ENCODE measurements at regions of chr2 and their contacts with region 1.

Region 1: GRCh38 chr2:30165050-30165520 is 18.3 kb downstream of the YPEL5 start:
- DNase-seq: peak in 8 of 9 experiments; percentile 28 to 90 (median 60)
- ATAC-seq: peak; percentile 83
- H3K4me3 ChIP-seq: no peak overlapping the region
- H3K4me3 Mint-ChIP-seq: no peak overlapping the region
- H3K27ac ChIP-seq: no peak overlapping the region
- H3K27ac Mint-ChIP-seq: no peak overlapping the region
- H3K4me1 ChIP-seq: no peaks in the 10 kb centered on the region
- H3K4me1 Mint-ChIP-seq: peaks cover 5% of the 10 kb centered on the region
- H3K27me3 ChIP-seq: no peaks in the 10 kb centered on the region
- H3K27me3 Mint-ChIP-seq: no peaks in the 10 kb centered on the region
- CTCF ChIP-seq: peak; percentile 93

Region 2: GRCh38 chr2:28855193-28855592 is 1309.9 kb before region 1 on chr2:
- CTCF ChIA-PET with region 1: no interaction called
- POLR2A ChIA-PET with region 1: no interaction called
- intact Hi-C with region 1: no loop called
- DNase-seq: no peak
- ATAC-seq: no peak
- H3K4me3 ChIP-seq: no peak overlapping the region
- H3K4me3 Mint-ChIP-seq: no peak overlapping the region
- H3K27ac ChIP-seq: no peak overlapping the region
- H3K27ac Mint-ChIP-seq: no peak overlapping the region
- H3K4me1 ChIP-seq: no peaks in the 10 kb centered on the region
- H3K4me1 Mint-ChIP-seq: no peaks in the 10 kb centered on the region
- H3K27me3 ChIP-seq: no peaks in the 10 kb centered on the region
- H3K27me3 Mint-ChIP-seq: no peaks in the 10 kb centered on the region
- CTCF ChIP-seq: no peak

Region 3: GRCh38 chr2:29000956-29001355 is 1164.1 kb before region 1 on chr2:
- CTCF ChIA-PET with region 1: no interaction called
- POLR2A ChIA-PET with region 1: no interaction called
- intact Hi-C with region 1: no loop called
- DNase-seq: peak in 2 of 9 experiments; percentile 34 to 38
- ATAC-seq: peak; percentile 13
- H3K4me3 ChIP-seq: no peak overlapping the region
- H3K4me3 Mint-ChIP-seq: no peak overlapping the region
- H3K27ac ChIP-seq: peak overlapping the region; percentile 19 to 79
- H3K27ac Mint-ChIP-seq: peak overlapping the region; percentile 92
- H3K4me1 ChIP-seq: peaks cover 28% of the 10 kb centered on the region
- H3K4me1 Mint-ChIP-seq: peaks cover 31% of the 10 kb centered on the region
- H3K27me3 ChIP-seq: no peaks in the 10 kb centered on the region
- H3K27me3 Mint-ChIP-seq: no peaks in the 10 kb centered on the region
- CTCF ChIP-seq: no peak

Region 4: DNA sequence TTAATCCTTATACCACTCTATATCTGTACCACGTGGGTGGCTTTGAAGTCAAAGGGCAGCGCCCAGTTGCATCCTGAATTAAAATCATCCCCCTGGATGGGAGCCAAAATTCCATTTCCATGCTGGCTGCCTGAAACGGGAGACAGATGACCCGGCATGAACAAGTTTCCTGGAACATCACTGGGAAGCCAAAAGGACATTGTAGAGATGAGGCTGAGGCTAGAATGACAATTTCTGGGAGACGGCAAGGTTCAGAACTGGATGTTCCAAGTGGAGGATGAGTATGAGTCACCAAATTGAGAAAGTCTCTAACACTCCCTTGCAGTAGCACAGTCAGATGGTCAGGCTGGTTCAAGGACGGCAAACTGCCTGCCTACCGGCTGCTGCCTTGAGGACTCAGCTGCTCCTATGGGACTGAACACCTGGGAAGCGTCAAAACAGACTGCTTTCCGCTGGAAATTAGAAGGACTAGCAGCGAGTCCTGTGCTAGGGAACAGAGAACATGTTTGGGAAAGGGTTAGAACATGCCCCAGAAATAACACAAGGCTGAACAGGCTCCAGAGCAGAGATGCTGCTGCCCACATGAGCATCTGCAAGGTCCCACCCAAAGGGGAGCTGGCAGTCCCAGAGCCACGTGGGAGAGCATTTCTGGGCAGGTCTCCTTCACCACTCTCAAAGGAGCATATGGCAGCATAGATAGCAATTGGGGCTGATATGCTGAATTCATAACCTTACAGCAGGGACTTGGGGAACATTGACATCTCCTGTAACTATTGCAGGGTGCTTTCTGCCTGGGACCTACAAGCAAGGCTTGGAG is 13.7 kb after region 1 on chr2:
- CTCF ChIA-PET with region 1: interaction called, 25 read pairs
- POLR2A ChIA-PET with region 1: no interaction called
- intact Hi-C with region 1: no loop called
- DNase-seq: no peak
- ATAC-seq: peak; percentile 27
- H3K4me3 ChIP-seq: no peak overlapping the region
- H3K4me3 Mint-ChIP-seq: no peak overlapping the region
- H3K27ac ChIP-seq: no peak overlapping the region
- H3K27ac Mint-ChIP-seq: no peak overlapping the region
- H3K4me1 ChIP-seq: no peaks in the 10 kb centered on the region
- H3K4me1 Mint-ChIP-seq: no peaks in the 10 kb centered on the region
- H3K27me3 ChIP-seq: no peaks in the 10 kb centered on the region
- H3K27me3 Mint-ChIP-seq: no peaks in the 10 kb centered on the region
- CTCF ChIP-seq: no peak

Region 5: GRCh38 chr2:30231212-30231995 is 66.3 kb after region 1 on chr2 and contains the start of gene LBH:
- CTCF ChIA-PET with region 1: interaction called, 26 read pairs
- POLR2A ChIA-PET with region 1: interaction called, 17 read pairs
- intact Hi-C with region 1: loop called (anchors 5 kb)
- DNase-seq: peak; percentile 82 to 97 (median 89)
- ATAC-seq: peak; percentile 48
- H3K4me3 ChIP-seq: peak within 1 kb of the TSS; percentile 89 to 96
- H3K4me3 Mint-ChIP-seq: peak within 1 kb of the TSS; percentile 94
- H3K27ac ChIP-seq: peak within 1 kb of the TSS; percentile 92 to 99
- H3K27ac Mint-ChIP-seq: peak within 1 kb of the TSS; percentile 96
- H3K4me1 ChIP-seq: peaks cover 52% of the 10 kb centered on the region
- H3K4me1 Mint-ChIP-seq: peaks cover 64% of the 10 kb centered on the region
- H3K27me3 ChIP-seq: no peaks in the 10 kb centered on the region
- H3K27me3 Mint-ChIP-seq: no peaks in the 10 kb centered on the region
- CTCF ChIP-seq: no peak
- total RNA-seq, gene LBH: 127 to 133 TPM

Region 6: GRCh38 chr2:30252723-30253701 is 87.9 kb after region 1 on chr2:
- CTCF ChIA-PET with region 1: interaction called, 8 read pairs
- POLR2A ChIA-PET with region 1: no interaction called
- intact Hi-C with region 1: loop called in 1 of 2 experiments (anchors 5 kb)
- DNase-seq: peak in 7 of 9 experiments; percentile 36 to 64 (median 55)
- ATAC-seq: peak; percentile 37
- H3K4me3 ChIP-seq: peak overlapping the region in 1 of 2 experiments; percentile 17
- H3K4me3 Mint-ChIP-seq: peak overlapping the region; percentile 46
- H3K27ac ChIP-seq: peak overlapping the region; percentile 28 to 68
- H3K27ac Mint-ChIP-seq: peak overlapping the region; percentile 98
- H3K4me1 ChIP-seq: peaks cover 97% of the 10 kb centered on the region
- H3K4me1 Mint-ChIP-seq: peaks cover 96% of the 10 kb centered on the region
- H3K27me3 ChIP-seq: no peaks in the 10 kb centered on the region
- H3K27me3 Mint-ChIP-seq: no peaks in the 10 kb centered on the region
- CTCF ChIP-seq: no peak

Region 7: GRCh38 chr2:30691948-30692828 is 527.1 kb after region 1 on chr2:
- CTCF ChIA-PET with region 1: interaction called, 16 read pairs
- POLR2A ChIA-PET with region 1: no interaction called
- intact Hi-C with region 1: no loop called
- DNase-seq: peak in 1 of 9 experiments; percentile 42
- ATAC-seq: no peak
- H3K4me3 ChIP-seq: no peak overlapping the region
- H3K4me3 Mint-ChIP-seq: no peak overlapping the region
- H3K27ac ChIP-seq: no peak overlapping the region
- H3K27ac Mint-ChIP-seq: no peak overlapping the region
- H3K4me1 ChIP-seq: no peaks in the 10 kb centered on the region
- H3K4me1 Mint-ChIP-seq: no peaks in the 10 kb centered on the region
- H3K27me3 ChIP-seq: peaks cover 0 to 4% of the 10 kb centered on the region in 2 experiments
- H3K27me3 Mint-ChIP-seq: peaks cover 2% of the 10 kb centered on the region
- CTCF ChIP-seq: no peak

Region 8: GRCh38 chr2:31333527-31334183 is 1168.6 kb after region 1 on chr2:
- CTCF ChIA-PET with region 1: interaction called, 13 read pairs
- POLR2A ChIA-PET with region 1: no interaction called
- intact Hi-C with region 1: loop called (anchors 2 to 5 kb)
- DNase-seq: peak; percentile 56 to 85 (median 72)
- ATAC-seq: peak; percentile 75
- H3K4me3 ChIP-seq: no peak overlapping the region
- H3K4me3 Mint-ChIP-seq: no peak overlapping the region
- H3K27ac ChIP-seq: no peak overlapping the region
- H3K27ac Mint-ChIP-seq: no peak overlapping the region
- H3K4me1 ChIP-seq: no peaks in the 10 kb centered on the region
- H3K4me1 Mint-ChIP-seq: no peaks in the 10 kb centered on the region
- H3K27me3 ChIP-seq: peaks cover 0 to 2% of the 10 kb centered on the region in 2 experiments
- H3K27me3 Mint-ChIP-seq: peaks cover 4% of the 10 kb centered on the region
- CTCF ChIP-seq: peak; percentile 98

Measured in CD8-positive, alpha-beta T cell (primary cell).